ENCODE measurements at regions of chr1 and their contacts with region 1.

Region 1: GRCh38 chr1:35079003-35079930 is at the start of gene ZMYM1:
- DNase-seq: peak; percentile 64 to 87 (median 75)
- ATAC-seq: peak; percentile 92
- H3K4me3 ChIP-seq: peak within 1 kb of the TSS; percentile 72
- H3K4me3 Mint-ChIP-seq: peak within 1 kb of the TSS; percentile 84 to 100 (median 98)
- H3K27ac ChIP-seq: peak within 1 kb of the TSS; percentile 86
- H3K27ac Mint-ChIP-seq: peak within 1 kb of the TSS; percentile 97 to 100 (median 99)
- H3K4me1 ChIP-seq: peaks cover 8 to 11% of the 10 kb centered on the region in 2 donors
- H3K4me1 Mint-ChIP-seq: peaks cover 24 to 47% (median 42%) of the 10 kb centered on the region in 7 donors
- H3K27me3 ChIP-seq: no peaks in the 10 kb centered on the region
- H3K27me3 Mint-ChIP-seq: peaks cover 0 to 17% (median 10%) of the 10 kb centered on the region in 5 donors
- total RNA-seq, gene ZMYM1: 11.8 to 21.2 (median 13.9) TPM

Region 2: DNA sequence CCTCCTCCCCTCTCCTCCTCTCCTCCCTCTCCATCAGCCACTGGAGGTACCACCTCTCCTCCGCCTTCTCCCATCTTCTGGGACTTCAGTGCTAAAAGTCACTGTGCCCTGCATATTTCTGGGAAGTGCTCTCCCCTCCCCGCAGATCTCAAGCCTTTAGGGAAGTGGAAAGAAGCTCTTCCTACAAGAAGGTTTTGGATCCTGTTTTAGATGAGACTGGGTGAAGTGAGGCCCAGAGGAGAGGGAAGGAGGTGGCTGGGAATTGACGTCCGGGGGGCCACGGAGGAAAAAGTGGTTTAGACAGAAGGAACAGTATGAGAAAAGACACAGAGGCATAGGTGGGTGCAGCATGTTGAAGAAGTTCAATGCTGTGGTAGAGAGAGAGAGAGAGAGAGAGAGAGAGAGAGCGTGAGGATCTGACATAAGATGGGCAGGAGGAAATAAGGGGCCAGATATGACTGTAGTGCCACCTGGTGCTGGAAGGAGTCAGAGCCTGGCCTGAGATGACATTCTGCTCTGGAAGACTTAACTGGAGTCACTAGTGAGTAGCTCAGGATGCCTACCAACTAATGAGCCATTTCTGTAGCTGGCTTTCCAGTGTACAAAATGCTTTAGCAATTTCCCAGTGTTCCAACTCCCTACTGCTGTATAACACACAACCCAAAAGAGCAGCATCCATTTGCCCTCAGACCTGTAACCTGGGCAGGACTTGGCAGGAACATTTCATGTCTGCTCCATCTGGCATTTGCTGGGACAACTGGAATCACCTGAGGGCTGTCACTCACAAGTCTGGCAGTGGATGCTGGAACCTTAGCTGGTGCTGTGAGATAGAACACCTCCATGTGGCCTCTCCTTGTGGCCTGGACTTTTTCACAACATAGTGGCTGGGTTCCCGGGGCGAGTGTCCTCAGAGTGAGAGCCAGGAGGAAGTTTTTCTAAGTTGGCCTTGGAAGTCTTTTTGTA is 1623.4 kb before region 1 on chr1:
- CTCF ChIA-PET with region 1: no interaction called
- POLR2A ChIA-PET with region 1: no interaction called
- intact Hi-C with region 1: no loop called
- DNase-seq: peak in 6 of 9 donors; percentile 19 to 44 (median 26)
- ATAC-seq: peak; percentile 89
- H3K4me3 ChIP-seq: no peak overlapping the region
- H3K4me3 Mint-ChIP-seq: no peak overlapping the region
- H3K27ac ChIP-seq: no peak overlapping the region
- H3K27ac Mint-ChIP-seq: peak overlapping the region in 3 of 9 donors; percentile 8 to 39 (median 33)
- H3K4me1 ChIP-seq: no peaks in the 10 kb centered on the region
- H3K4me1 Mint-ChIP-seq: peaks cover 0 to 5% (median 0%) of the 10 kb centered on the region in 7 donors
- H3K27me3 ChIP-seq: no peaks in the 10 kb centered on the region
- H3K27me3 Mint-ChIP-seq: peaks cover 0 to 25% (median 9%) of the 10 kb centered on the region in 5 donors

Region 3: DNA sequence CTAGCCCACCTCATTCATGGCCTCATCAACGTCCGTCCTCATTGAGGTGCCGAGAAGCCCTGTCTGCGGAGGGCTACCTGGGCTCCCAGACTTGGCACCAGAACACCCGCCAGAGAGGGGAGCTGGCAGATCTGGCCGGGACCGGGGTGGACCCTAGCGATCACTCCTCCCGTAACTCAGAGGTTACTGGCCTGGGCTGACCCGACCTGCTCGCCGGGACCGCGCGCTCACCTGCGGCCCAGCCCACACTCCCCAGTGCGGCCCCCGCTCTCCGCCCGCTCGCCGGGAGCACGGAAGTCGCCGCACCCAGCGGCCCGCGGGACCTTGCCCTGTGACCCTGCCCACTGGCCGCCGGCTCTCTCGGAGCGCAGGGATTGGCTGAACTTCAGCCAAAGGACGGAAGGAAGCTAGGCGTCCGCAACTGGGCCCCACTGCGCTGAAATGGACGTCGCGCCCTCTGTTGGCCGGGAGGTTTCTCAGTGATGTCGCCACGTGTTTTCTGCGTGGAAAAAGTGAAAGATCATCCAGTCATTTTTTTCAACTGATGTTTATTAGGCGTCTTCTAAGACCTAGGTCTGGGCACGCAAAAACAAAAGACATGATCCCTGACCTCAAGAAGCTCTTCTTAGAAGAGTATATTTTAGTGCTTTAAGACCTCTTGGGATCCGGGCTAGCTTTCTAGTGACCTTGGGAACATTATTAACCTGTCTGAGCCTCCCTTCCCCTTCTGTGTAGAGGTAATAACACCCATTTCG is 219.6 kb before region 1 on chr1 and contains the start of gene SMIM12:
- CTCF ChIA-PET with region 1: no interaction called
- POLR2A ChIA-PET with region 1: no interaction called
- intact Hi-C with region 1: loop called in 1 of 2 experiments (anchors 2 kb)
- DNase-seq: peak; percentile 69 to 92 (median 75)
- ATAC-seq: peak; percentile 99
- H3K4me3 ChIP-seq: peak within 1 kb of the TSS; percentile 72
- H3K4me3 Mint-ChIP-seq: peak within 1 kb of the TSS; percentile 85 to 100 (median 95)
- H3K27ac ChIP-seq: peak within 1 kb of the TSS; percentile 93
- H3K27ac Mint-ChIP-seq: peak within 1 kb of the TSS; percentile 90 to 99 (median 96)
- H3K4me1 ChIP-seq: peaks cover 38 to 43% of the 10 kb centered on the region in 2 donors
- H3K4me1 Mint-ChIP-seq: peaks cover 39 to 66% (median 63%) of the 10 kb centered on the region in 7 donors
- H3K27me3 ChIP-seq: no peaks in the 10 kb centered on the region
- H3K27me3 Mint-ChIP-seq: no peaks in the 10 kb centered on the region
- total RNA-seq, gene SMIM12: 29.1 to 46.4 (median 38.2) TPM

Region 4: DNA sequence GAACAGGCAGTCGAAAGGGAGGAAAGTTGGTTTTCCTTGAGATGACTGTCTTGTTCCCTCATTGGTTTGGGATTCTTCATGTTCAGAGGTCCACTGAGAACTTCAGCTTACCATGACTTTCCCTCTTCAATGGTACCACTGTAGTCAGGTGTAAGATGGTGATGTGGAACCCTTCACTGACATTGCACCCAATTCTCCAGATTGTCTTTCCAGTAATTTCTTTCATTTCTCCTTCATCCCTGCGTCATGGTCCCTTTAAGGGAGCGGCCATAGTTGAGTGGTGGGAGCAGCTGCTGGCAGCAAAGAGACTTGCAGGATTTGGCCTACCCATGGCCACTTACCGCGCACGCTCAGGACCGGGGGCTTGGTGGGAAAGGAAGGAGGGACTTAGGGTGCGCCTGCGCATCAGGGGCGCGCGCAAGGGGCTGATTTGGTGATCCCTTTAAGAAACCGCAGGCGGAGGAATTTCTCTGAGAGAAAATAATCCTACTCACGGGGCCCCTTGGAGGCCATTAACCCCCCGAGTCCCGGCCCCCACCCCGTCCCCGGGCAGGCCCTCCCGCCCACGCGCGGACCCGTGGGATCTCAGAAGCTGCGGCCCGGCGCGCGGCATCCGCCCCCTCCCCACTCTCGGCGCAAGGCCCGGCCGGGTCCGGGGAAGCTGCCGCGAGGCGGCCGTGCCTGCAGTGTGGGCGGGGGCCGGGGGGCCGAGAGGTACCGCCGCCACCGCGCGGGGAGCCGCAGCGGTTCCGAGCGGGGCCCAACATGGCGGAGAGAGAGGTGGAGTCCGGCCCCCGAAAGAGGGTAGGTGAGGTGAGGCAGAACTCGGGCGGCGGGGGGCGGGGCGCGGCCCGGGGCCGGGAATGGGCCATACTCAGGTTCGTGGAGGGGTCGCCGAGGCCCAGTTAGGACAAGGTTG is 189.3 kb after region 1 on chr1 and contains the start of gene ZMYM4:
- CTCF ChIA-PET with region 1: no interaction called
- POLR2A ChIA-PET with region 1: no interaction called
- intact Hi-C with region 1: loop called in 1 of 2 experiments (anchors 5 kb)
- DNase-seq: peak; percentile 67 to 91 (median 87)
- ATAC-seq: peak; percentile 96
- H3K4me3 ChIP-seq: peak within 1 kb of the TSS; percentile 58
- H3K4me3 Mint-ChIP-seq: peak within 1 kb of the TSS; percentile 78 to 98 (median 90)
- H3K27ac ChIP-seq: peak within 1 kb of the TSS; percentile 88
- H3K27ac Mint-ChIP-seq: peak within 1 kb of the TSS; percentile 80 to 99 (median 93)
- H3K4me1 ChIP-seq: peaks cover 6 to 20% of the 10 kb centered on the region in 2 donors
- H3K4me1 Mint-ChIP-seq: peaks cover 22 to 44% (median 40%) of the 10 kb centered on the region in 7 donors
- H3K27me3 ChIP-seq: no peaks in the 10 kb centered on the region
- H3K27me3 Mint-ChIP-seq: peaks cover 0 to 5% (median 0%) of the 10 kb centered on the region in 5 donors
- total RNA-seq, gene ZMYM4: 32.1 to 52.9 (median 45.6) TPM